Naive thymus-derived CD4-positive, alpha-beta T cell (primary cell): ENCODE measurements at regions of chr12 and their contacts with region 1.

Region 1: GRCh38 chr12:56688129-56688845 is at the start of gene PTGES3:
- DNase-seq: peak; percentile 95 to 98 (median 98)
- ATAC-seq: peak; percentile 87
- H3K4me3 ChIP-seq: peak within 1 kb of the TSS; percentile 80
- H3K4me3 Mint-ChIP-seq: peak within 1 kb of the TSS; percentile 97 to 100 (median 100)
- H3K27ac ChIP-seq: peak within 1 kb of the TSS; percentile 98
- H3K27ac Mint-ChIP-seq: peak within 1 kb of the TSS; percentile 95 to 100 (median 99)
- H3K4me1 ChIP-seq: peaks cover 12 to 19% of the 10 kb centered on the region in 2 donors
- H3K4me1 Mint-ChIP-seq: peaks cover 20 to 41% (median 34%) of the 10 kb centered on the region in 7 donors
- H3K27me3 ChIP-seq: no peaks in the 10 kb centered on the region
- H3K27me3 Mint-ChIP-seq: no peaks in the 10 kb centered on the region
- total RNA-seq, gene PTGES3: 111 to 229 (median 153) TPM

Region 2: DNA sequence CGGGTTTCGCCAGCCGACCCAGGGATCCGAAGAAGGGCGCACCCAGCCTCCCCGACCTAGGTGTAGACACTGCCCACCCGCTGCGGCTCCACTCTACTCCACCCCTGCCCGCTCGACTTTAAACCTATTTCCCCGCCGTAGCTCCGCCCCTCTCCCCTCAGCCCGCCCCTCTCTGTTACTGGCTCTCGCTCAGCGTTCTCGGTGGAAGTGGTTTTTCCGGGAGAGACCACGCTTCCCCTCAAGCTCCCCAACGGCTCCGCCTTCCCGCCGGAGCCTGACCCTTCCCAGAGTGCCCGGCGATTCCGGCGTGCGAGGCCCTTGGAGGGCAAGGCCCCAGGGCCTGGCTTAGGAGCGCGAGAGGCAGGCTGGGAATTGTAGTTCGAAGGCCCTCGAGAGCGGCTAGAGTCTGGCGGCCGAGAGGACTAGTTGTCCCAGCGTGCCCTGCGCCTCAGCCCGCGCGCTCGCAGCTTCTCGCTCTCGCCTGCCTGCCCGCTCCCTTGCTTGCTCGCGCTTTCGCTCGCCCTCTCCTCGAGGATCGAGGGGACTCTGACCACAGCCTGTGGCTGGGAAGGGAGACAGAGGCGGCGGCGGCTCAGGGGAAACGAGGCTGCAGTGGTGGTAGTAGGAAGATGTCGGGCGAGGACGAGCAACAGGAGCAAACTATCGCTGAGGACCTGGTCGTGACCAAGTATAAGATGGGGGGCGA is 584.0 kb before region 1 on chr12 and contains the start of gene PA2G4:
- CTCF ChIA-PET with region 1: no interaction called
- POLR2A ChIA-PET with region 1: no interaction called
- intact Hi-C with region 1: loop called in 1 of 2 experiments (anchors 1 kb)
- DNase-seq: peak; percentile 83 to 97 (median 96)
- ATAC-seq: peak; percentile 93
- H3K4me3 ChIP-seq: peak within 1 kb of the TSS; percentile 87
- H3K4me3 Mint-ChIP-seq: peak within 1 kb of the TSS; percentile 91 to 100 (median 98)
- H3K27ac ChIP-seq: peak within 1 kb of the TSS; percentile 82
- H3K27ac Mint-ChIP-seq: peak within 1 kb of the TSS; percentile 92 to 99 (median 98)
- H3K4me1 ChIP-seq: peaks cover 36 to 37% of the 10 kb centered on the region in 2 donors
- H3K4me1 Mint-ChIP-seq: peaks cover 31 to 69% (median 64%) of the 10 kb centered on the region in 7 donors
- H3K27me3 ChIP-seq: no peaks in the 10 kb centered on the region
- H3K27me3 Mint-ChIP-seq: peaks cover 0 to under 1% (median 0%) of the 10 kb centered on the region in 5 donors
- total RNA-seq, gene PA2G4: 61.7 to 254 (median 109) TPM

Region 3: DNA sequence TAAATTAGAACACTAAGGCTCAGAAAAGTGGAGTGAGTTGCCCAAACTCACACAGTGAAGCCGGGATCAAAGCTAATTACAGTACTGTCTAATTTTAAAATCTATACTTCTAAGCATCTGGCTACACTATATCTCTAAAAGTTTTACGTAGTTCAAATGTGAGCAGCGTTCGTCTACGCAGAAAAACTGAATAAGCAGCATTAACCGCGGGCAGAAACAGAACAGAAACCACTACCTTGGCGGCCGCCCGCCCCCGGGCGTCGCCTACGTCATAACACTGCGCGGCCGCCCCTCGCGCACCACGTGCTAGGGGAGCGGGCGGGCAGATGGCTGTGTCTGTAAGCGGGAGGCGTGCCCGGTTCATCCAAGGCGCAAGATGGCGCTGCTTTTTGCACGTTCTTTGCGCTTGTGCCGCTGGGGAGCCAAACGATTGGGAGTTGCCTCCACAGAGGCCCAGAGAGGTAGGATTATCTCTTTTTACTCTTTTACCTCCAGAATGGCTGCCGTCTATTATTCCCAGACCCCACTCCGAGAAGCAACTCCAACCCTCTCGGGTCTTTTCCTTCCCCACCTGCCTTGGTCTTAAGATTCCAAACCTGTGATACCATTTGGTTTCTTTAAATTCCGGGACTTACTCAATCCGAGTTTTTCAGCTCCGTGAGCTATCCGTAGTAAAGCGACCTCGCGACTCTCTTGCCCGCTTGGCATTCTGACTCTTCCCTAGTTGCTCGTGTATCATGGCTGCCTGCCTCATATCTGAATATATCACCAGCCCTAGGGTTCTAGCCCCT is 219.9 kb before region 1 on chr12 and contains the start of gene SPRYD4:
- CTCF ChIA-PET with region 1: no interaction called
- POLR2A ChIA-PET with region 1: no interaction called
- intact Hi-C with region 1: loop called (anchors 1 to 5 kb)
- DNase-seq: peak; percentile 89 to 97 (median 96)
- ATAC-seq: peak; percentile 99
- H3K4me3 ChIP-seq: peak within 1 kb of the TSS; percentile 99
- H3K4me3 Mint-ChIP-seq: peak within 1 kb of the TSS; percentile 90 to 99 (median 97)
- H3K27ac ChIP-seq: peak within 1 kb of the TSS; percentile 87
- H3K27ac Mint-ChIP-seq: peak within 1 kb of the TSS; percentile 92 to 99 (median 98)
- H3K4me1 ChIP-seq: peaks cover 12 to 20% of the 10 kb centered on the region in 2 donors
- H3K4me1 Mint-ChIP-seq: peaks cover 6 to 51% (median 26%) of the 10 kb centered on the region in 7 donors
- H3K27me3 ChIP-seq: no peaks in the 10 kb centered on the region
- H3K27me3 Mint-ChIP-seq: no peaks in the 10 kb centered on the region
- total RNA-seq, gene SPRYD4: 5.2 to 7.5 (median 7.2) TPM

Region 4: DNA sequence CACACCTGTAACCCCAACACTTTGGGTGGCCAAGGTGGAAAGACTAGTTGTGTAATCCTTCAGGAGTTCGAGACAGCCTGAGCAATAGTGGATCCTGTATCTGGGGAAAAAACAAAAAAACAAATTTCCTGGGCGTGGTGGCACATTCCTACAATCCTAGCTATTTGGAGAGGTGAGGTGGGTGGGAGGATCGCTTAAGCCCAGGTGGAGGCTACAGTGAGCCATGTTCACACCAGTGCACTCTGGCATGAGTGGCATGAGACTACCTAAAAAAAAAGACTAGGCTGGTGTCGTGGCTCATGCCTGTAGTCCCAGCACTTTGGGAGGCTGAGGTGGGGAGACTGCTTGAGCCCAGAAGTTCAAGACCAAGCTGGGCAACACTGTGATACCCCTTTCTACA is 17.5 kb before region 1 on chr12:
- CTCF ChIA-PET with region 1: interaction called, 5 read pairs
- POLR2A ChIA-PET with region 1: interaction called, 13 read pairs
- intact Hi-C with region 1: loop called in 1 of 2 experiments (anchors 2 kb)
- DNase-seq: no peak
- ATAC-seq: no peak
- H3K4me3 ChIP-seq: no peak overlapping the region
- H3K4me3 Mint-ChIP-seq: no peak overlapping the region
- H3K27ac ChIP-seq: peak overlapping the region; percentile 22
- H3K27ac Mint-ChIP-seq: peak overlapping the region in 2 of 9 donors; percentile 21 to 25
- H3K4me1 ChIP-seq: peaks cover 4 to 17% of the 10 kb centered on the region in 2 donors
- H3K4me1 Mint-ChIP-seq: peaks cover 17 to 46% (median 40%) of the 10 kb centered on the region in 7 donors
- H3K27me3 ChIP-seq: no peaks in the 10 kb centered on the region
- H3K27me3 Mint-ChIP-seq: no peaks in the 10 kb centered on the region

Region 5: GRCh38 chr12:56751712-56752598 is 63.7 kb after region 1 on chr12 and contains the start of gene PRIM1:
- CTCF ChIA-PET with region 1: interaction called, 5 read pairs
- POLR2A ChIA-PET with region 1: interaction called, 21 read pairs
- intact Hi-C with region 1: loop called (anchors 1 kb)
- DNase-seq: peak; percentile 69 to 91 (median 78)
- ATAC-seq: peak; percentile 93
- H3K4me3 ChIP-seq: peak within 1 kb of the TSS; percentile 98
- H3K4me3 Mint-ChIP-seq: peak within 1 kb of the TSS; percentile 88 to 98 (median 97)
- H3K27ac ChIP-seq: peak within 1 kb of the TSS; percentile 81
- H3K27ac Mint-ChIP-seq: peak within 1 kb of the TSS; percentile 80 to 99 (median 93)
- H3K4me1 ChIP-seq: peaks cover 3 to 7% of the 10 kb centered on the region in 2 donors
- H3K4me1 Mint-ChIP-seq: peaks cover 22 to 46% (median 42%) of the 10 kb centered on the region in 7 donors
- H3K27me3 ChIP-seq: no peaks in the 10 kb centered on the region
- H3K27me3 Mint-ChIP-seq: no peaks in the 10 kb centered on the region
- total RNA-seq, gene PRIM1: 11.5 to 39.8 (median 26.2) TPM

Region 6: DNA sequence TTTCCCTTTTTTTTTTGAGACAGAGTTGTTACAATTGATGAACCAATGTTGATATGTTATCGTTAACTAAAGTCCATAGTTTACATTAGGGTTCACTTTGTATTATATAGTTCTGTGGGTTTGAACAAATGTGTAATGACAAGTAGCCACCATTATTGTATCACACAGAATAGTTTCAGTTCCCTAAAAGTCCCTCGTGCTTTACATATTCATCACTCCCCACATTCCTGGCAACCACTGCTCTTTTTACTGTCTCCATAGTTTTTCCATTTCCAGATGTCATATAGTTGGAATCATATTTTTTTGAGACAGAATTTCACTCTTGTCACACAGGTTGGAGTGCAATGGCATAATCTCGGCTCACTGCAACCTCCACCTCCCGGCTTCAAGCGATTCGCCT is 87.4 kb after region 1 on chr12:
- CTCF ChIA-PET with region 1: no interaction called
- POLR2A ChIA-PET with region 1: no interaction called
- intact Hi-C with region 1: no loop called
- DNase-seq: no peak
- ATAC-seq: peak; percentile 49
- H3K4me3 ChIP-seq: no peak overlapping the region
- H3K4me3 Mint-ChIP-seq: no peak overlapping the region
- H3K27ac ChIP-seq: no peak overlapping the region
- H3K27ac Mint-ChIP-seq: no peak overlapping the region
- H3K4me1 ChIP-seq: no peaks in the 10 kb centered on the region
- H3K4me1 Mint-ChIP-seq: peaks cover 0 to 1% (median 0%) of the 10 kb centered on the region in 7 donors
- H3K27me3 ChIP-seq: no peaks in the 10 kb centered on the region
- H3K27me3 Mint-ChIP-seq: peaks cover 0 to 4% (median 0%) of the 10 kb centered on the region in 5 donors

Region 7: DNA sequence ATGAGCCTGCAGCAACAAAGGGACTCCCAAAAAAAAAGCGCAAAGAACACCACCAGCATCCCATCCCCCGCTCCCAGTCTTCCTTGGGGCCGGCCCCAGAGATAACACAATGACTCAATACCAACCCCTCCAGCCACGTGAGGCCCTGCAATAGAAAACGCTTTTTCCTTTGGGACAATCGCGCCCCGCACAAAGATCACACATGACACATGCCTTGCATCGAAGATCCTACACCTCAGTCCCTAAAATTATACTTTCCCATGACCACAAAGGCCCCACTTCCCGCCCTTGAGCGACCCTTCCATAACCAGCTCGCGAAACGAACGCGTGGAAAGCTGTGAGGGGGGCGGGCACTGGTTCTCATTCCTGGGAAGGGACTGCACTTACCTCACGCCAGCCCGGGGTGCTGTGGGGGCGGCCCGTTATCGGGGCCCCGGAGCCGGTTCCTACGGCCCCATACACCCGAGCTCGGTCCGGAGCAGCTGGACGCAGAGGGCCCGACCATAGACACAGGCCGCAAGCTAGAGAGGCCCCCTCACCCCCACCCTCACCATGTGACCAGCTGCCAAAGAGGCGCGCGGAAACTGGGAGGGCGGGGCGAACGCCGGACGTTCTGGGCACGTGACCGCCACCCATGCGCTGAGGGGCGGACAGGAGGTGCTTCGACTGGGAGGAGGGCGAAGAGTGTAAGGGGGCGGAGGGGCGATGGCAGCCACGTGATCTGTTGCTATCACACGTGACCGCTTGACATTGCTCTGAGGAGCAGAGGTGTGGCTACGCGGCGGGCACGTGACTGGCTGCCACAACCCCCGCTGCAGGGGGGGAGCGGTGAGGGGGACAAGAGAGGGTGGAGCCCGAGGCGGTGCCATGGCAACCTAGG is 1063.7 kb after region 1 on chr12 and contains the start of gene CDK4:
- CTCF ChIA-PET with region 1: no interaction called
- POLR2A ChIA-PET with region 1: no interaction called
- intact Hi-C with region 1: loop called in 1 of 2 experiments (anchors 5 kb)
- DNase-seq: peak; percentile 92 to 100 (median 99)
- ATAC-seq: peak; percentile 89
- H3K4me3 ChIP-seq: peak within 1 kb of the TSS; percentile 79
- H3K4me3 Mint-ChIP-seq: peak within 1 kb of the TSS; percentile 82 to 98 (median 92)
- H3K27ac ChIP-seq: peak within 1 kb of the TSS; percentile 90
- H3K27ac Mint-ChIP-seq: peak within 1 kb of the TSS; percentile 86 to 99 (median 93)
- H3K4me1 ChIP-seq: peaks cover 32 to 42% of the 10 kb centered on the region in 2 donors
- H3K4me1 Mint-ChIP-seq: peaks cover 35 to 62% (median 59%) of the 10 kb centered on the region in 7 donors
- H3K27me3 ChIP-seq: no peaks in the 10 kb centered on the region
- H3K27me3 Mint-ChIP-seq: peaks cover 0 to 2% (median 0%) of the 10 kb centered on the region in 5 donors
- total RNA-seq, gene CDK4: 23.8 to 108 (median 42.9) TPM